Activated CD4-positive, alpha-beta T cell treated with anti-CD3 and anti-CD28 coated beads, Interleukin-2, amount 10 ng/mL, durations not matched to agents 24 days and 14 days (primary cell): ENCODE measurements at regions of chr5 and their contacts with region 1.

Region 1: DNA sequence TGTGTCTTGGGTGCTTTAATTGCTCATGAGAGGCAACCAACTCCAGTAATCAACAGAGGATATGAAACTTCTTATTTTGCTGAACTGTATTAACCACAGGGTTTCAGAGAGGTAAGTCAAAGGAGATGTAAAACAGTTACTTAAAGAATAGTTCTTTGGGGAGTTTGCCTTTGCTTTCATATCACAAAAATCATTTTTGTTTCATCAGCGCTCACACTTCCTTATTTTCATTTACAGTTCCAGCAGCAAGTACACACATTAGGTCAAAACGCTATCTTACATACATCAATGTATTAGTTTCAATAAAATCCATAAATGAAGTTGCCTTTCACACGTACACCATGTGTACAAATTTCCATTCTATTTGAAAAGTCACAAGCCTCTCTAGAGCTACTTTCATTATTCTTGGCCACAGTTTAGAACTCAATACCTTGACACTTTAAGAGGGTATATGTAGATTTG is 50.1 kb downstream of the ST8SIA4 start:
- DNase-seq: no peak
- H3K4me3 Mint-ChIP-seq: peak overlapping the region; percentile 73
- H3K27ac Mint-ChIP-seq: peak overlapping the region; percentile 89
- H3K4me1 Mint-ChIP-seq: peaks cover 31% of the 10 kb centered on the region
- H3K27me3 Mint-ChIP-seq: no peaks in the 10 kb centered on the region

Region 2: GRCh38 chr5:100731768-100732167 is 121.3 kb before region 1 on chr5:
- intact Hi-C with region 1: loop called (anchors 5 kb)
- DNase-seq: peak; percentile 82
- H3K4me3 Mint-ChIP-seq: peak overlapping the region; percentile 70
- H3K27ac Mint-ChIP-seq: peak overlapping the region; percentile 80
- H3K4me1 Mint-ChIP-seq: peaks cover 9% of the 10 kb centered on the region
- H3K27me3 Mint-ChIP-seq: no peaks in the 10 kb centered on the region